K562 (cell line): ENCODE measurements at regions of chrX and their contacts with region 1.

Region 1: DNA sequence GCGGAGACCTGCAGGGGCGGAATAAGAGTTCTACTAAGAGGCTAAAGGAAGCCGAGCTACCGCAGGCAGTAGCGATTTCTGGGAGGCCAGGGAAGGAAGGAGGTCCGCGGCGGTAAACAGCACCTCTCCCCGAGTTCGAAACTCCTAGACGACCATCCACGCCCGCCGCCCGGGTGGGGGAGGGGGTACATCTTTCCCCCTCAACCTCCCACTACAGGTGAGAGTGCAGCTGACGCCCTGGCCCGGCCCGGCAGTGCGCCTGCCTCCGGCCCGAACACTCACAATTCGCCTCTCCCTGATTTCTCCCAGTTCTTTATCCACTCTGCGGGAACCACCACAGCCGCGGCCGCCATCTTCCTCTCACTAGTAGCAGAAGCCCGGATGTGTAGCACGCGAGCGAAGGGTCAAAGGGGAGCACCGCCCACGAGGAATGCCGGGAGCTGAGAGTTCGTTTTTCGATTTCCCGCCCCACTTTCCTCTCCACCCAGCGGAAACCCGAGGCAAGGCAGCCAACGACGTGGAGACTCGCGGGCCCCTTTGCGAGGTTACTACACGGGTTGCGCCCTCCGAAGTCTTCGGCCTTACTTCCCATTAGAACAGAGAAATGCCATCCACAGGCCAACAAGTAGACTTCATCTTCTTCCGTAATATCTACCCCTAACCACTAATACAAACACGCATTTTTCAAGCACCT is at the start of gene THOC2:
- DNase-seq: peak; percentile 71 to 93 (median 78)
- ATAC-seq: peak; percentile 79
- H3K4me3 ChIP-seq: peak within 1 kb of the TSS; percentile 91
- H3K27ac ChIP-seq: peak within 1 kb of the TSS; percentile 97
- H3K4me1 ChIP-seq: peaks cover 0 to 5% of the 10 kb centered on the region in 2 experiments; a peak in 2 of 5 replicates
- H3K27me3 ChIP-seq: no peaks in the 10 kb centered on the region
- CTCF ChIP-seq: peak; percentile 42 to 53 (median 49); a peak in 4 of 6 replicates
- EP300 ChIP-seq: no peak
- POLR2A ChIP-seq: peak; percentile 93
- RAD21 ChIP-seq: peak in 1 of 2 experiments; percentile 24; a peak in 1 of 4 replicates
- polyA plus RNA-seq, gene THOC2: 131 to 194 TPM

Region 2: GRCh38 chrX:123764967-123765871 is 32.4 kb after region 1 on chrX:
- CTCF ChIA-PET with region 1: no interaction called
- POLR2A ChIA-PET with region 1: interaction called, 12 read pairs
- in situ Hi-C with region 1: no loop called
- intact Hi-C with region 1: no loop called
- DNase-seq: peak; percentile 84 to 94 (median 87)
- ATAC-seq: peak; percentile 99
- H3K4me3 ChIP-seq: peak overlapping the region; percentile 26
- H3K27ac ChIP-seq: peak overlapping the region; percentile 69
- H3K4me1 ChIP-seq: 0 out of 5 replicates have a peak, but pooled peaks cover 0 to 4% of the 10 kb centered on the region in 2 experiments
- H3K27me3 ChIP-seq: no peaks in the 10 kb centered on the region
- CTCF ChIP-seq: no peak
- EP300 ChIP-seq: no peak
- POLR2A ChIP-seq: peak; percentile 80
- RAD21 ChIP-seq: no peak

Region 3: GRCh38 chrX:123976706-123977316 is 244.0 kb after region 1 on chrX:
- CTCF ChIA-PET with region 1: no interaction called
- POLR2A ChIA-PET with region 1: no interaction called
- in situ Hi-C with region 1: no loop called
- intact Hi-C with region 1: no loop called
- DNase-seq: peak in 2 of 4 experiments; percentile 25 to 53
- ATAC-seq: peak; percentile 73
- H3K4me3 ChIP-seq: no peak overlapping the region
- H3K27ac ChIP-seq: no peak overlapping the region
- H3K4me1 ChIP-seq: peaks cover under 1 to 6% of the 10 kb centered on the region in 2 experiments; a peak in 4 of 5 replicates
- H3K27me3 ChIP-seq: no peaks in the 10 kb centered on the region
- CTCF ChIP-seq: peak; percentile 39 to 62 (median 45); a peak in 4 of 6 replicates
- EP300 ChIP-seq: no peak
- POLR2A ChIP-seq: no peak
- RAD21 ChIP-seq: peak; percentile 66 to 69